ENCODE measurements at regions of chr11 and their contacts with region 1.

Region 1: DNA sequence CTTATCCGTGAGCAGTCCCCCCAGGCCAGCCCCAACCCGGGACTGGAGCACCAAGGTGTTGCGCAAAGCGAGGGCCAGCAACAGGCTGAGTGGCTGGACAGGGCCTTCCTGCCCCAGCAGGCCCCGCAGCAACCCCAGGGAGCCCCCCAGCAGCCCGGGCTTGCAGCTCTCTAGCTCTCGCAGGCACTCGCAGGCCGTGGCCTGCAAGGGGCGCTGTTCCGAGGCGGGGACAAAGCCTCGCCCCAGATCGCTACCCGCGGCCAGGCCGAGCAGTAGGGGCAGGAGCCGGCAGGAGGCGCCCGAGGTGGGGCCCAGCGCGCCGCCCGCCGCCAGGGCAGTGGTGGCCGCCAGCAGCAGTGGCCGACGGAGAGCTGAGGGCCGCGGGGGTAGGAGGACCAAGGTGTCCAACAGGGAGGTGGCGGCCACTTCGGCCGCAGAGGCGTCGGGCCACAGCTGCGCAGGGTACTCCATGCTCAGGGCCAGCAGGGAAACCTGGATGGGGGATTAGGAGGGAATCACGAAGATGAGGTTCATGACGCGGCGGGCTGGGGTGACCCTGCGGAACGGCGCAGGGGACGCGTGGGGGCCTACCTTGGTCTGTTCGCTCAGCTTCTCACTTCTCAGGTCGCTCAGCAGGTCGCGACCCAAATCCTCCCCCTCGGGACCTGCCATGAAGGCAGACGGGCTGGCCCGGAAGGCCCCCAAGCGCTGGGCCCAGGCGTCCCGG is 762 bp downstream of the AP5B1 start:
- DNase-seq: peak; percentile 88
- H3K4me3 ChIP-seq: peak overlapping the region; percentile 80
- H3K27ac ChIP-seq: peak overlapping the region; percentile 23
- H3K4me1 ChIP-seq: peaks cover 6% of the 10 kb centered on the region
- CTCF ChIP-seq: peak; percentile 94

Region 2: GRCh38 chr11:65802841-65803240 is 22.8 kb after region 1 on chr11:
- CTCF ChIA-PET with region 1: interaction called, 3 read pairs
- POLR2A ChIA-PET with region 1: interaction called, 4 read pairs
- intact Hi-C with region 1: loop called (anchors 1 kb)
- DNase-seq: peak; percentile 29
- H3K4me3 ChIP-seq: no peak overlapping the region
- H3K27ac ChIP-seq: no peak overlapping the region
- H3K4me1 ChIP-seq: peaks cover 6% of the 10 kb centered on the region
- CTCF ChIP-seq: no peak

Region 3: DNA sequence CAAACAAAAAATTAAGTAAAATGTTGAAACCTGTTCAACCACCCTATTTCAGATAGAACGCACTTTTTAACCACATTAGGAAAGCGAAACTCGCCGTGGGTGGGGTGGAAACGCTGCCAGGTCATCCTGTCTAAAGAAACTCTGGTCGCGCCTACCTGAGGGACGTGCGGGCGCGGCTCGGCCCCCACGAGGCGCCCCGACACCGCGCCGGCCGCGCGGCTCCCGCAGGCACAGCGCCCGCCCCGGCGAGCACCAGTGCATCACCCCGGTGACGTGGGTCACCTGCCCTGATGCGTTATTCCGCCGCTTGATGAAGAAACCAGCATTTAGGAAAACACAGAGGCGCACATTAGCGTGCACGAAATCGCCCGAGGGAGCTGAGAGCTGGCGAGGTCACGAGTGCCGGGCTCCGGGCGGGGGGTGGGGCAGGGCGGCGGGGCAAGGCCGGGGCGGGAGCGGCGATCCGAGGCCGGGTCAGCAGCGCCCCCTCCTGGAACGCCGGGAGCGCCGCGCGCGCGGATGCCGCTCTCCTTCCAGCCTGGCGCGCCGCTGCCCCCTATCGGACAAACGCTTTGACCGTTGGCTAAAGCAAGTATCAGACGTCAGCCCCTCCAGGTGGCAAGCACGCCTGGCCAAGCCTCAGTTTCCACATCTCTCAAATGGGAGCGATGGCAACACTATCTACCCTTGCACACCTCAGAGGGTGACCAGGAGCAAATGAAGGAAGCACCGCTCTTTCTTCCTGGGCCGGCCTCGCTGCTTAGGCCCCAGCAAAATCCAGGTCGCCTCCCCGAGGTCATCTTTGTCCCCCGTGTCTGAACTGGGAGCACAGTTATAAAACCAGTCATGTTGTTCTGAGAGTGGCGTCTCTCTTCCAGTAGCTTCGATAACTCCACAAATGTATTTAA is 38.1 kb after region 1 on chr11:
- CTCF ChIA-PET with region 1: interaction called, 6 read pairs
- POLR2A ChIA-PET with region 1: no interaction called
- intact Hi-C with region 1: loop called (anchors 1 kb)
- DNase-seq: peak; percentile 91
- H3K4me3 ChIP-seq: peak overlapping the region; percentile 67
- H3K27ac ChIP-seq: no peak overlapping the region
- H3K4me1 ChIP-seq: peaks cover 5% of the 10 kb centered on the region
- CTCF ChIP-seq: peak; percentile 95

Region 4: GRCh38 chr11:65988791-65989592 is 209.0 kb after region 1 on chr11:
- CTCF ChIA-PET with region 1: no interaction called
- POLR2A ChIA-PET with region 1: no interaction called
- intact Hi-C with region 1: loop called (anchors 2 kb)
- DNase-seq: peak; percentile 94
- H3K4me3 ChIP-seq: no peak overlapping the region
- H3K27ac ChIP-seq: no peak overlapping the region
- H3K4me1 ChIP-seq: no peaks in the 10 kb centered on the region
- CTCF ChIP-seq: peak; percentile 100